Activated CD8-positive, alpha-beta T cell treated with anti-CD3 and anti-CD28 coated beads for 36 hours (primary cell): ENCODE measurements at regions of chr10 and their contacts with region 1.

Region 1: GRCh38 chr10:132536971-132537712 is 445 bp upstream of the INPP5A start:
- DNase-seq: peak; percentile 100
- ATAC-seq: peak; percentile 92
- H3K4me3 Mint-ChIP-seq: peak overlapping the region; percentile 78
- H3K27ac Mint-ChIP-seq: no peak overlapping the region
- H3K4me1 Mint-ChIP-seq: peaks cover 52% of the 10 kb centered on the region
- H3K27me3 Mint-ChIP-seq: no peaks in the 10 kb centered on the region
- CTCF ChIP-seq: no peak

Region 2: GRCh38 chr10:132458593-132459300 is 78.4 kb before region 1 on chr10:
- CTCF ChIA-PET with region 1: no interaction called
- POLR2A ChIA-PET with region 1: no interaction called
- intact Hi-C with region 1: loop called (anchors 5 kb)
- DNase-seq: peak; percentile 69
- ATAC-seq: peak; percentile 87
- H3K4me3 Mint-ChIP-seq: no peak overlapping the region
- H3K27ac Mint-ChIP-seq: no peak overlapping the region
- H3K4me1 Mint-ChIP-seq: no peaks in the 10 kb centered on the region
- H3K27me3 Mint-ChIP-seq: no peaks in the 10 kb centered on the region
- CTCF ChIP-seq: peak; percentile 94

Region 3: GRCh38 chr10:132551093-132551807 is 14.1 kb after region 1 on chr10:
- CTCF ChIA-PET with region 1: interaction called, 34 read pairs
- POLR2A ChIA-PET with region 1: interaction called, 32 read pairs
- intact Hi-C with region 1: no loop called
- DNase-seq: peak; percentile 74
- ATAC-seq: peak; percentile 68
- H3K4me3 Mint-ChIP-seq: peak overlapping the region; percentile 68
- H3K27ac Mint-ChIP-seq: peak overlapping the region; percentile 89
- H3K4me1 Mint-ChIP-seq: peaks cover 39% of the 10 kb centered on the region
- H3K27me3 Mint-ChIP-seq: no peaks in the 10 kb centered on the region
- CTCF ChIP-seq: peak; percentile 24

Region 4: GRCh38 chr10:132571650-132572535 is 34.8 kb after region 1 on chr10:
- CTCF ChIA-PET with region 1: interaction called, 3 read pairs
- POLR2A ChIA-PET with region 1: interaction called, 9 read pairs
- intact Hi-C with region 1: loop called (anchors 5 kb)
- DNase-seq: peak; percentile 92
- ATAC-seq: peak; percentile 87
- H3K4me3 Mint-ChIP-seq: peak overlapping the region; percentile 28
- H3K27ac Mint-ChIP-seq: peak overlapping the region; percentile 69
- H3K4me1 Mint-ChIP-seq: peaks cover 28% of the 10 kb centered on the region
- H3K27me3 Mint-ChIP-seq: no peaks in the 10 kb centered on the region
- CTCF ChIP-seq: no peak

Region 5: GRCh38 chr10:132637477-132638129 is 100.5 kb after region 1 on chr10:
- CTCF ChIA-PET with region 1: interaction called, 4 read pairs
- POLR2A ChIA-PET with region 1: no interaction called
- intact Hi-C with region 1: loop called (anchors 10 kb)
- DNase-seq: peak; percentile 29
- ATAC-seq: peak; percentile 80
- H3K4me3 Mint-ChIP-seq: no peak overlapping the region
- H3K27ac Mint-ChIP-seq: no peak overlapping the region
- H3K4me1 Mint-ChIP-seq: peaks cover 23% of the 10 kb centered on the region
- H3K27me3 Mint-ChIP-seq: no peaks in the 10 kb centered on the region
- CTCF ChIP-seq: peak; percentile 75